Activated CD8-positive, alpha-beta T cell treated with anti-CD3 and anti-CD28 coated beads, Interleukin-2, amount 10 ng/mL, durations not matched to agents 7 days and 5 days (primary cell): ENCODE measurements at regions of chr20 and their contacts with region 1.

Region 1: GRCh38 chr20:38472513-38473372 is at the start of gene RALGAPB:
- DNase-seq: peak; percentile 98
- ATAC-seq: peak; percentile 97
- H3K4me3 Mint-ChIP-seq: peak within 1 kb of the TSS; percentile 85
- H3K27ac Mint-ChIP-seq: peak within 1 kb of the TSS; percentile 86
- H3K4me1 Mint-ChIP-seq: peaks cover 35% of the 10 kb centered on the region
- H3K27me3 Mint-ChIP-seq: peaks cover 7% of the 10 kb centered on the region
- total RNA-seq, gene RALGAPB: 29.5 to 29.6 TPM

Region 2: DNA sequence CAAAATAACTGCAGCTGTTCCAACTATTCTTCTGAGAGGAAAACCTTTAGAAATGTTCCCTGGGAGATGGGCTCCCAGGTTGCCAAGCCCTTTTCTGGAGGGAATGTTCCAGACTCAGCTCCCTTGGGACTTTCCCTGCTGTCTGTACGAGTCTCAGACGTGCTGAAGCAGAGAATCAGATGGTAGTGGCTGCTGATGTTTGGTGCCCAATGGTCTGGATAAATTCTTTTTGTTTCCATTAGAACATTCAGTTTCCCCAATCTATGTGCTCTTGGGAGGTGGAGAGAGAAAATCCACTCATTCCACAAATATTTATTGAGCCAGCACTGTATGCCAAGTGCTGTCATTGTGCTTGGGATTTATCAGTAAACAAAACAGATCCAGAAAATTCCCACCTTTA is 77.6 kb before region 1 on chr20:
- CTCF ChIA-PET with region 1: no interaction called
- POLR2A ChIA-PET with region 1: no interaction called
- DNase-seq: no peak
- ATAC-seq: no peak
- H3K4me3 Mint-ChIP-seq: no peak overlapping the region
- H3K27ac Mint-ChIP-seq: no peak overlapping the region
- H3K4me1 Mint-ChIP-seq: no peaks in the 10 kb centered on the region
- H3K27me3 Mint-ChIP-seq: peaks cover 24% of the 10 kb centered on the region

Region 3: DNA sequence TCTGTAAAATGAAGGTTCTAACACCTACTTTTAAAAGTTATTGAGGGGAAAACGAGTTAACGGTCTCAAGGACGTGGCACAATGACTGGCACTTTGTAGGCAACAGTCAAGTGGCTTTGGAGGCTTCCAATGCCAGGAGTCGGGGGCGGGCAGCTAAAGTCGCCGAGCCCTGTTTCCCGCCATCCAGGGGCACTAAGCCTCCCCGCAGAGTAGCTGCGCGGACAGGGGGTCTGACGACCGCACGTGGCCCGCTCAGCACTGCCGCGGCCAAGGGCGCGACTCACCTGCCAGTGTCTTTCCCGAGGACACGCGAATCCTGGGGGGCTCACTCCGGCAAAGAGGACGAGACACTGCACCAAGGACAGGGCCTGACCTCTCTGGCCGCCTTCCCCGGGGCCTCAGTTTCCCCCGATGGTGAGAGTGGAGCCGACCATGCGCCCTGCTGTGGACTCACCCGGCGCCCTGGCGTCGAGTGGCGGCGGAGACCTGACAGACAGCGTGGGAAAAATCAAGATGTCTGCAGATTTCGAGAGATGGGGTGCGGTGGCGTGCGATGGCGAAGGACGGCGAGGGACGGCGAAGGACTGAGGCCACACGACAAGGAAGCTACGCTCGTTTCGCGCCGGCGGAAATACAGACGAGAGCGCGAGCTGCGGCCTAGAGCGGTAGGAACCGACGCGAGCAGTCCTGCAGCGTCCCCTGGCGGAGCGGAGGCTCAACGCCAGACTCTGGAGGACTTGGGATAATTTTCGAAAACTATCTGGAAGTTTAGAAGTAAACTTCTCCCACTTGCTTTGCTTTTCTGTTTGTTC is 37.8 kb before region 1 on chr20 and contains the start of gene SNHG17:
- CTCF ChIA-PET with region 1: interaction called, 31 read pairs
- POLR2A ChIA-PET with region 1: interaction called, 17 read pairs
- DNase-seq: peak; percentile 92
- ATAC-seq: peak; percentile 83
- H3K4me3 Mint-ChIP-seq: peak within 1 kb of the TSS; percentile 95
- H3K27ac Mint-ChIP-seq: peak within 1 kb of the TSS; percentile 96
- H3K4me1 Mint-ChIP-seq: peaks cover 41% of the 10 kb centered on the region
- H3K27me3 Mint-ChIP-seq: peaks cover 4% of the 10 kb centered on the region
- total RNA-seq, gene SNHG17: 69.6 to 77.8 TPM

Region 4: DNA sequence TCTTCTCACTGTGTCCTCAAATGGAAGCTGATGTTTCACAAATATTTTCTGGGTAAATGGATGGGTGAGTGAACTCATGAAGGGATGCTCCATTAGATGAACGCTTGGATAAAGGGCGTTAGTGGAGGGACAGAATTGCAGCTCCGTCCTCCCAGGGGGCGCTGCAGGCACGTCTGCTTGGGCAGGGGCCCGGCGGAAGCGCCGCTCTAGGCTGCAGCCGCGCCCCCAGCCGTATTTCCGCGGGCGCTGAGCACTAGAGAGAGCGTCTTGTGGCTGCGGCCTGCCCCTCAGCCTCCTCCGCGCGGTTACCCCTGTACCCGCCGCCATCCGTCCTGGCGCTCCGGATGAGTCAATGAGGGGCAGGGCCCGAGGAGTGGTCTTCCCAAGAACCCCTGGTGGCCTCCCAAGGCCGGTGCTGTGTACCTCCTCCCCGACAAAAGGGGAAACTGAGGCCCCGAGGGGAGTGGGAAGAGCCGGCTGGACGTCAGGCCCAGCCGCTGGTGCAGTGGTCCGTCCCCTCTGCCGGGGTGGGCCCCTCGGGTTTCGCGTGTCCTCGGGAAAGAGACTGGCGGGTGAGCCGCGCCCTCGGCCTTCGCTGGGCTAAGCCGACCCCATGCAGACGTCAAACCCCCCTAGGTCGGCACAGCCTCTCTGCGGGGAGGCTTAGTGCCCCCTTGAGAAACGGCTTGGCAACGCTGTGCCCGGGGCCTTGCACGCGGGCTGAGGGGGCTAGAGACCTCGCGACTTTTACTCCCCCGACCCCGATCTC is 26.1 kb before region 1 on chr20:
- CTCF ChIA-PET with region 1: interaction called, 39 read pairs
- POLR2A ChIA-PET with region 1: interaction called, 23 read pairs
- DNase-seq: peak; percentile 94
- ATAC-seq: peak; percentile 97
- H3K4me3 Mint-ChIP-seq: peak overlapping the region; percentile 78
- H3K27ac Mint-ChIP-seq: peak overlapping the region; percentile 88
- H3K4me1 Mint-ChIP-seq: peaks cover 26% of the 10 kb centered on the region
- H3K27me3 Mint-ChIP-seq: peaks cover 6% of the 10 kb centered on the region

Region 5: DNA sequence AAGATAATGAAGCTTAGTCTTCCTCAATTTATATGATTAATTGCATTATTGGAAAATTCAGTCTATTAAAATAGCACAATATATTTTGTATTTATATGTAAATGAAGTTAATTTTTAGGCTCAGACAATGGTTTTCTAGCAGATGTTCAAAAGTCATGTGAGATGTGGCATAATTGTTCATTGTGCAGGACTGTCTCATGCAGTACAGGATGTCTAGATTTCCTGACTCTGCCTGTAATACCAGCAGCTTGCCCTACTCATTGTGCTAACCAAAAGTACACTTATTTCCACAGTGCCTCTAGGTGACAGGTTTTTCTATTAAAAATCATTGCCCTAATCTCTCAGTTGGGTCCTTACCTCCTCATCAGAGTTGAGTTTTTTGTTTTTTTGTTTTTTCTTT is 12.3 kb after region 1 on chr20:
- CTCF ChIA-PET with region 1: interaction called, 19 read pairs
- POLR2A ChIA-PET with region 1: interaction called, 5 read pairs
- DNase-seq: no peak
- ATAC-seq: no peak
- H3K4me3 Mint-ChIP-seq: no peak overlapping the region
- H3K27ac Mint-ChIP-seq: no peak overlapping the region
- H3K4me1 Mint-ChIP-seq: no peaks in the 10 kb centered on the region
- H3K27me3 Mint-ChIP-seq: no peaks in the 10 kb centered on the region

Region 6: GRCh38 chr20:38581013-38581412 is 108.3 kb after region 1 on chr20 and contains the start of gene ADIG:
- CTCF ChIA-PET with region 1: no interaction called
- POLR2A ChIA-PET with region 1: no interaction called
- DNase-seq: peak; percentile 15
- ATAC-seq: no peak
- H3K4me3 Mint-ChIP-seq: no peak within 1 kb of the TSS
- H3K27ac Mint-ChIP-seq: no peak within 1 kb of the TSS
- H3K4me1 Mint-ChIP-seq: no peaks in the 10 kb centered on the region
- H3K27me3 Mint-ChIP-seq: no peaks in the 10 kb centered on the region
- total RNA-seq, gene ADIG: not detected